Posterior cingulate gyrus (tissue), 11 donors: ENCODE measurements at regions of chr19 and their contacts with region 1.

Region 1: GRCh38 chr19:8355631-8356402 is 8.1 kb upstream of the ANGPTL4 start:
- DNase-seq: peak in 1 of 10 donors; percentile 14

Region 2: DNA sequence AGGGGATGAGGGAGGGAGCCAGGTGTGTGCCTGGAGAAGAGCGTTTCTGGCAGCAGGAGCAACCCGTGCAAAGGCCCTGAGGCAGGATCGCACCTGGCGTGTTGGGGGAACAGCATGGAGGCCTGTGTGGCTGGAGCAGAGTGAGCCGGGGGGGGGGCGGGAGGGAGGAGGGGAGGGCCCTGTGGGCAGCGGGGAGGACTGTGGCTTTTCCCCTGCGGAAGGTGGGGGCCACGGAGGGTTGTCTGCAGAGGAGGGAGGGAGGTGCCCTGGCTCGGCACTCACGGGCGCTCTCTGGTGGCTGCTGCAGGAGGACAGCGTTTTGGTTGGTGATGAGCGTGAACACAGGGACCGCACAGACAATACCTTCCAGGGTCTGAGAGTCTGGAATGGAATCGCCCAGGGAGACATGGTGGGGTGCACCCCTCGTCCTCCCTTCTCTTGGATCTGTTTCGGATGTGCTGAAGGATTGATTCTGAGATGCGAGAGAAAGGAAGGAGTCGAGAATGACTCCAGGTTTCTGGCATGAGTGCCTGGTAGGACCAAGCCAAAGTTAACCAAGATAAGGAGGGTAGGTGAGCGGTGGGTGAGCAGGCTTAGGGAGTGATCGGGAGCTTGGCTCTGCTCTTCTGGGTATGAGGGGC is 40.9 kb after region 1 on chr19:
- intact Hi-C with region 1: loop called (anchors 1 kb)
- DNase-seq: peak; percentile 56 to 95 (median 74)

Region 3: DNA sequence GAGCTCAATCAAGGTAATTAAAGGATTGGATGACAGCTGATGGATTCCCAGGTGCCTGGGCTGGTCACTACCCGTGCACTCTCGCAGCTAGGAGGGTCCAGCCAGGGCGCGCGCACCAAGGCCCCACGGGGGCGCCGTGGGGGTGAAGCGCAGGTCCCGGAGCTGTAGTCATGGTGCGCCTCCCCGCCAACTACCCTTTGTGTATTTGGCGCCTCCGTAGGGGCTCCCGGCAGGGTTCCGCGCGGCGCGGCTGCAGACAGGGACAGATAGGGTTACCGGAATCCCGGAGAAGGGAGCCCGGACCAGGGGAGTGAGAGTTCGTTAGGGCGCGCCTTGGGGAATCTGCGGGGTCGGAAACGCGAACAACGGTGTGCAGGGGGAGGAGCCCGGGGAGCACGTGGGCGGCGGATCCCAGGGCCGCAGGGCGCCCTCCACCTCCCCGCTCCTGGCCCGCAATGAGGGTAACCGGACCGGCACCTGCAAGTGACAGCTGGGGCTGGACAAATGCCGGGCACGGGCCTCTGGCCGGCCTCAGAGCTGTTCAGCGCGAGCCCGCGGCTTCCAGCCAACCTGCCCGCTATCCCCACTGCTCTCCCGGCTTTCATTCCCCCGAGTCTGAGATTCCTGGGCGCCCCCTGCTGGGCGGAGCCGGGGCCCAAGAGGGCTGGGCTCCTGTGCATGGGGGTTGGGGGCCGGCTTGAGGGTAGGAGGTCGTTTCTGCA is 150.0 kb after region 1 on chr19:
- intact Hi-C with region 1: loop called (anchors 1 kb)
- DNase-seq: peak; percentile 67 to 97 (median 84)

Region 4: GRCh38 chr19:8530061-8530679 is 174.4 kb after region 1 on chr19:
- intact Hi-C with region 1: no loop called
- DNase-seq: no peak

Region 5: GRCh38 chr19:8580710-8581281 is 225.0 kb after region 1 on chr19:
- intact Hi-C with region 1: loop called (anchors 5 kb)
- DNase-seq: peak in 8 of 10 donors; percentile 27 to 93 (median 66)